ENCODE measurements at regions of chr11 and their contacts with region 1.

Region 1: DNA sequence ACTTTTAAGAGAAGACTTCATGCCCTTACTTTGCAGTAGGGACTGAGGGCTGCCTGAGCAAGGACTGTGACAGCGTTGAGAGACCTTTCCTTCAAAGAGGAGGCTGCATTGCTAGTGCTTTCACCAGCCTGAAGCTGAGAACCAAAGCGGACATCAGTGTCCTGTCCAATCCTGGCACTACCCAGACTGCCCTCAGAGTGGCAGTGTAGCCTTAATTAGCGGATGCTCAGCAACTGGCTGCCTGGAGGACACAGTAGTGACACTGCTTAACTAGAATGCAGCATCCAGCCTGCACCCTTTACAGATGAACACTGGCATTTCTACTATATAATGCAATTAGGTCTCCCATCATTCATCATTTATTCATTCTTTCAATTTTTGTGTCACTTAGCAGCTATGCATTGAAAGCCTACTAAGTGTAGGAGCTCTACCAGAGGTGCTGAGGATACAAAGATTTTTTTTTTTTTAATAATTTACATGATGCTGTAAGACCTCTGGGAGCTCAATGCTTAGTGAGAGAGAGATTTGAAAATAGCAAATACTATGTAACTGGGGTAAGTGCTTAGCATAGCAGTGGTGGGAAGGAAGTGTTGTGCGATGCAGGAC is 36.9 kb upstream of the SLC36A4 start:
- DNase-seq: peak; percentile 74 to 75
- H3K4me3 ChIP-seq: no peak overlapping the region
- H3K27ac ChIP-seq: no peak overlapping the region
- H3K4me1 ChIP-seq: no peaks in the 10 kb centered on the region
- H3K27me3 ChIP-seq: no peaks in the 10 kb centered on the region
- CTCF ChIP-seq: peak; percentile 76 to 93 (median 90)
- POLR2A ChIP-seq: no peak

Region 2: GRCh38 chr11:92931746-92932422 is 302.8 kb before region 1 on chr11:
- intact Hi-C with region 1: no loop called
- DNase-seq: no peak
- H3K4me3 ChIP-seq: no peak overlapping the region
- H3K27ac ChIP-seq: no peak overlapping the region
- H3K4me1 ChIP-seq: no peaks in the 10 kb centered on the region
- H3K27me3 ChIP-seq: no peaks in the 10 kb centered on the region
- CTCF ChIP-seq: no peak
- POLR2A ChIP-seq: no peak

Region 3: DNA sequence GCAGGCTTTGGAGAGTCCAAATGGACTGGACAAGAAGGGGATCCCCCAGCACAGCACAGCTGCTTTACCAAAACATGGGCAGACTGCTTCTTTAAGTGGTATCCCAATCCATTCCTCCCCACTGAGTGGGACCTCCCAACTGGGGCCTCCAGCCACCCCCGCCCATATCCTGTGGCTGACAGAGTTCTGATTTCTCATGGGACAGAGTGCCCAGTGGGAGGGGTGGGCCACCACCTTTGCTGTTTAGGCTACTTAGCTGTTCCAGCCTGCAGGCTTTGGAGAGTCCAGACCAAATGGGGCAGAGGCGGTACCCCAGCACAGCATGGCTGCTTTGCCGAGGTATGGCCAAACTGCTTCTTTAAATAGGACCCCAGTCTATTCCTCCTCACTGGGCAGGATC is 69.0 kb after region 1 on chr11:
- intact Hi-C with region 1: loop called (anchors 2 kb)
- DNase-seq: no peak
- H3K4me3 ChIP-seq: no peak overlapping the region
- H3K27ac ChIP-seq: no peak overlapping the region
- H3K4me1 ChIP-seq: no peaks in the 10 kb centered on the region
- H3K27me3 ChIP-seq: no peaks in the 10 kb centered on the region
- CTCF ChIP-seq: no peak
- POLR2A ChIP-seq: no peak

Region 4: GRCh38 chr11:93652161-93652597 is 417.5 kb after region 1 on chr11:
- intact Hi-C with region 1: loop called (anchors 10 kb)
- DNase-seq: no peak
- H3K4me3 ChIP-seq: no peak overlapping the region
- H3K27ac ChIP-seq: no peak overlapping the region
- H3K4me1 ChIP-seq: no peaks in the 10 kb centered on the region
- H3K27me3 ChIP-seq: no peaks in the 10 kb centered on the region
- CTCF ChIP-seq: peak; percentile 62 to 74 (median 73)
- POLR2A ChIP-seq: no peak